Endothelial cell of umbilical vein (primary cell): ENCODE measurements at regions of chr12 and their contacts with region 1.

Region 1: GRCh38 chr12:88580051-88580871 is at the start of gene KITLG:
- DNase-seq: peak; percentile 88
- H3K4me3 ChIP-seq: peak within 1 kb of the TSS; percentile 54 to 69 (median 62)
- H3K27ac ChIP-seq: peak within 1 kb of the TSS; percentile 37
- H3K4me1 ChIP-seq: peaks cover 17% of the 10 kb centered on the region
- H3K27me3 ChIP-seq: no peaks in the 10 kb centered on the region
- CTCF ChIP-seq: peak; percentile 9 to 51
- POLR2A ChIP-seq: peak; percentile 99
- total RNA-seq, gene KITLG: 32.5 and 46.4 TPM in 2 replicates

Region 2: DNA sequence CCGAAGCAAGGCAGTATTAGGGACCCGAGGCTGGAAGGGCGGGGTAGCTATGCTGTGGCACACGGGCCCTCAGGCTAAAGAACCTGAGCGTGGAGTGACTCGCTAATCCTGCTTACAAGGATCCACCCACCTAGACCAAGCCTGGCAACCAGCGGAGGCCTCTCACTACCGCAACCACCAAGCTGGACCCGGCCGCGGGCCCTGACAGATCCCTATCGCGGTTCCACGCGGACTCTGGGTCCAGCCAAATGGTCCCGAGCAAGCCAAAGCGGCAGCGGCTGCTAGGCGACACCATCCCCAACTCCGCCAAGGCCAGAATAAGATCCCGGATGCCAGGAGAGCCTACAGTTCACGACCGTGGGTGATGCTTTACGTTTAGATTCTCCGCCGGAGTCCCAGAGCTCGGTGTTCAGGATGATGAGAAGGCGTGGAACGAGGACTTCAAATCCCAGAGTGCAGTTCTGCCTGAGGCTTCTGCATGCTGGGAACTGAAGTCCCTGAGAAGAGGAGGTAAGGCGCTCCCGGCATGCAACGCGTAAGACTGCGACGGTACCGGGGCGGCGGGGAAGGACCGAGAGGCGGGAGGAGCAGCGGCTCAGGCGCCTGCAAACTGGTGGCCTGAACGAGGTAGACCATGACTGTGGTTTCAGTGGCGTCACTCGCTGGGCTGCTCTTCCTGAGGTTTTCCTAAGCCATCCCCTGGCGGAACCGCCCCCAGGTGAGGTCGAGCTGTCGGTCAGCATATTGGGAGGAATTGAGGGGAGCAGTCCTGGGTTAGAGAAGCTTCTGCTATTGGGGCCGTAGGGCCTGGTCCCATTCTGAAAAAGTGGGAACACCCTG is 438.3 kb before region 1 on chr12 and contains the starts of genes CEP290 and TMTC3:
- CTCF ChIA-PET with region 1: no interaction called
- POLR2A ChIA-PET with region 1: no interaction called
- dilution Hi-C with region 1: no loop called
- intact Hi-C with region 1: loop called (anchors 5 kb)
- DNase-seq: peak; percentile 99
- H3K4me3 ChIP-seq: peak within 1 kb of the TSS; percentile 23 to 88 (median 68)
- H3K27ac ChIP-seq: peak within 1 kb of the TSS; percentile 41
- H3K4me1 ChIP-seq: peaks cover 15% of the 10 kb centered on the region
- H3K27me3 ChIP-seq: no peaks in the 10 kb centered on the region
- CTCF ChIP-seq: no peak
- POLR2A ChIP-seq: peak; percentile 71
- total RNA-seq, gene CEP290: 16.5 and 19.1 TPM in 2 replicates
- total RNA-seq, gene TMTC3: 34.5 and 36.5 TPM in 2 replicates

Region 3: GRCh38 chr12:88553941-88554658 is 26.2 kb before region 1 on chr12:
- CTCF ChIA-PET with region 1: interaction called, 6 read pairs
- POLR2A ChIA-PET with region 1: no interaction called
- dilution Hi-C with region 1: no loop called
- intact Hi-C with region 1: loop called (anchors 1 kb)
- DNase-seq: peak; percentile 87
- H3K4me3 ChIP-seq: no peak overlapping the region
- H3K27ac ChIP-seq: no peak overlapping the region
- H3K4me1 ChIP-seq: peaks cover 26% of the 10 kb centered on the region
- H3K27me3 ChIP-seq: no peaks in the 10 kb centered on the region
- CTCF ChIP-seq: no peak
- POLR2A ChIP-seq: no peak

Region 4: GRCh38 chr12:88638966-88639760 is 58.9 kb after region 1 on chr12:
- CTCF ChIA-PET with region 1: interaction called, 6 read pairs
- POLR2A ChIA-PET with region 1: interaction called, 6 read pairs
- dilution Hi-C with region 1: no loop called
- intact Hi-C with region 1: loop called (anchors 2 kb)
- DNase-seq: peak; percentile 60
- H3K4me3 ChIP-seq: no peak overlapping the region
- H3K27ac ChIP-seq: peak overlapping the region; percentile 59
- H3K4me1 ChIP-seq: peaks cover 16% of the 10 kb centered on the region
- H3K27me3 ChIP-seq: no peaks in the 10 kb centered on the region
- CTCF ChIP-seq: no peak
- POLR2A ChIP-seq: no peak

Region 5: GRCh38 chr12:89524541-89525285 is 944.5 kb after region 1 on chr12 and contains the start of gene GALNT4:
- CTCF ChIA-PET with region 1: no interaction called
- POLR2A ChIA-PET with region 1: no interaction called
- dilution Hi-C with region 1: no loop called
- intact Hi-C with region 1: loop called (anchors 10 kb)
- DNase-seq: peak; percentile 92
- H3K4me3 ChIP-seq: peak within 1 kb of the TSS; percentile 16 to 92 (median 59)
- H3K27ac ChIP-seq: peak within 1 kb of the TSS; percentile 35
- H3K4me1 ChIP-seq: peaks cover 32% of the 10 kb centered on the region
- H3K27me3 ChIP-seq: no peaks in the 10 kb centered on the region
- CTCF ChIP-seq: peak; percentile 40 to 82
- POLR2A ChIP-seq: peak; percentile 25
- total RNA-seq, gene GALNT4: 9.8 and 10.9 TPM in 2 replicates

Region 6: DNA sequence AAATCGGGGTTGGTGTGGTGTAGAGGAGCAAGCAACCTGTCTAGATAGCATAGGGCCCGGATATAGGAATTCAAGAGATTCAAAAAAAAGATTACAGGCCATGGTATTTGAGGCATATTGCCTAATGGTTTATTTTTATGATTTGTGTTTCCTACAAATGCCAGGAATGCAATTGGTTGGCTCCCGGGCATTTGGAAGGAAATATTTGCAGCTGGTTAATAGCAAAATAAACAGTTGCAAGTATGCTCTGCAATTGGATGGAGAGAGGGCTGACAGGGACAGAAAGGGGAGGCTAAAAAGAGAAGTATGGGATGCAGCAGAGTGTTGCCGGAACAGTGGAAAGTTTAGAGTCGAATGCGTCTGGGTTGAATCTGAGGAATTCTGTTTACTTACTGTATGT is 1444.0 kb after region 1 on chr12:
- CTCF ChIA-PET with region 1: no interaction called
- POLR2A ChIA-PET with region 1: no interaction called
- dilution Hi-C with region 1: no loop called
- intact Hi-C with region 1: no loop called
- DNase-seq: peak; percentile 30
- H3K4me3 ChIP-seq: no peak overlapping the region
- H3K27ac ChIP-seq: no peak overlapping the region
- H3K4me1 ChIP-seq: peaks cover 10% of the 10 kb centered on the region
- H3K27me3 ChIP-seq: no peaks in the 10 kb centered on the region
- CTCF ChIP-seq: no peak
- POLR2A ChIP-seq: no peak